Panc1 (cell line): ENCODE measurements at regions of chr4 and their contacts with region 1.

Region 1: GRCh38 chr4:15805583-15806517 is 27.7 kb downstream of the CD38 start:
- DNase-seq: peak; percentile 22
- ATAC-seq: peak; percentile 82
- H3K4me3 ChIP-seq: no peak overlapping the region
- H3K27ac ChIP-seq: no peak overlapping the region
- H3K4me1 ChIP-seq: no peaks in the 10 kb centered on the region
- H3K27me3 ChIP-seq: no peaks in the 10 kb centered on the region
- CTCF ChIP-seq: peak; percentile 72

Region 2: DNA sequence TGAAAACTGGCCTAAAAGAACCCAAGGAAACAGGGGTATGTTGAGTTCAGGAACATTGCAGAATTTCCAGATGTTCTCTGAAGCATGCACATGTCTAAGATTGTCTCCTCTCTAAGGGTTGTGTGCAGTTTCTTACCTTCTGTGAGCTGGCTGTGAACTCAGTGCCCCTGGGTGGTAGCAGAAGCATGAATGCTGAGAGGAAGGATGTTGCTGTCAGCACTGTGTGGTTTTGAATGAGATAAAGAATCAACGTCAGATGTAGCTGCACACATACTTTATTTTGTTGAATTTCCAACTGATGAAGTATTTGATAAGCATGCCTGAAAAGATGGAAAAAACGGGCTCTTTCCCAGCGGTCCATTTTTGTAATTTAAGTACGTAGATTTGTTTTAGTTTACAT is 51.5 kb before region 1 on chr4:
- CTCF ChIA-PET with region 1: no interaction called
- POLR2A ChIA-PET with region 1: no interaction called
- in situ Hi-C with region 1: no loop called
- intact Hi-C with region 1: no loop called
- DNase-seq: no peak
- ATAC-seq: no peak
- H3K4me3 ChIP-seq: no peak overlapping the region
- H3K27ac ChIP-seq: no peak overlapping the region
- H3K4me1 ChIP-seq: no peaks in the 10 kb centered on the region
- H3K27me3 ChIP-seq: no peaks in the 10 kb centered on the region
- CTCF ChIP-seq: no peak

Region 3: GRCh38 chr4:15873117-15873516 is 67.3 kb after region 1 on chr4:
- CTCF ChIA-PET with region 1: interaction called, 12 read pairs
- POLR2A ChIA-PET with region 1: no interaction called
- in situ Hi-C with region 1: no loop called
- intact Hi-C with region 1: loop called (anchors 5 kb)
- DNase-seq: no peak
- ATAC-seq: no peak
- H3K4me3 ChIP-seq: no peak overlapping the region
- H3K27ac ChIP-seq: no peak overlapping the region
- H3K4me1 ChIP-seq: no peaks in the 10 kb centered on the region
- H3K27me3 ChIP-seq: no peaks in the 10 kb centered on the region
- CTCF ChIP-seq: no peak

Region 4: DNA sequence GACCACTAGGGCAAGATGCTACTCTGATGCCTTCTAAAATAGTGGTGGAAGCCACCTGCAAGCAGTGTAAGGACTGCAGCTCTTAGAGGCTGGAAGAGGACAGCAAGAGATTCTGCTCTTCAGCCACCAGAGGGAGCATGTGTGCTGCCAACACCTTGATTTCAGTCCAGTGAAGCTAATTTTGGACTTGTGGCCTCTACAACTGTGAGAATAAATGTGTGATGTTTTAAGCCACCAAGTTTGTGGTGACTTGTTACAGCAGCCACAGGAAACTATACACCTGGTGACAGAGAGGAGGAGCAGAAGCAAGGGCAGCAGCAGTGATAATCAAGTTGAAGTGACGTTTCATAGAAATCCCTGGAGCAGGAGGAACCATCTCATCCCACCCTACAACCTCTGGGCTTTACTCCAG is 76.8 kb after region 1 on chr4:
- CTCF ChIA-PET with region 1: interaction called, 4 read pairs
- POLR2A ChIA-PET with region 1: no interaction called
- in situ Hi-C with region 1: no loop called
- intact Hi-C with region 1: loop called (anchors 5 kb)
- DNase-seq: peak; percentile 65
- ATAC-seq: peak; percentile 88
- H3K4me3 ChIP-seq: no peak overlapping the region
- H3K27ac ChIP-seq: no peak overlapping the region
- H3K4me1 ChIP-seq: no peaks in the 10 kb centered on the region
- H3K27me3 ChIP-seq: no peaks in the 10 kb centered on the region
- CTCF ChIP-seq: peak; percentile 83

Region 5: GRCh38 chr4:15893962-15894361 is 88.1 kb after region 1 on chr4:
- CTCF ChIA-PET with region 1: no interaction called
- POLR2A ChIA-PET with region 1: no interaction called
- in situ Hi-C with region 1: no loop called
- intact Hi-C with region 1: no loop called
- DNase-seq: peak; percentile 32
- ATAC-seq: peak; percentile 80; the same call in 1 of the 2 replicates
- H3K4me3 ChIP-seq: no peak overlapping the region
- H3K27ac ChIP-seq: no peak overlapping the region
- H3K4me1 ChIP-seq: no peaks in the 10 kb centered on the region
- H3K27me3 ChIP-seq: no peaks in the 10 kb centered on the region
- CTCF ChIP-seq: no peak